ENCODE measurements at regions of chr21 and their contacts with region 1.

Region 1: DNA sequence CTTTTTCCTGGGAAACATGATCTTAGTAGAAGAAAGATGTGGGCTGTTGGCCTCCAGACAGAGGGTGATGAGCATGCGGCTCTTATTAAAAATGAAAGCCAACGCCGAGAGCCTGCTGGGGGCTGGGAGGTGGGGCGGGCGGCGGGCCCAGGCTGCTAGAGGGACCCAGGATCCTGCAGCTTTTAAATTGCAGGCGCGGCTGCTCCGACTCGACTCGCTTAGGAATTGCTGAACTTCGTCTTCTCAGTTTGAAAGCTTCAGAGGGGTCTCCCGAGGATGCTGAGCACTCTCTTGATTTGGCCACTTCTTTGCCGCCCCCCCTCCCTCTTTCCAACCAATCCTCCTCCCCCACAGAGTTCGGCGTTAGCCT is 1.2 kb downstream of the AGPAT3 start:
- DNase-seq: peak; percentile 29 to 63 (median 47)
- H3K4me3 ChIP-seq: peak overlapping the region; percentile 62 to 69
- H3K4me3 Mint-ChIP-seq: peak overlapping the region; percentile 84 to 92 (median 88)
- H3K27ac ChIP-seq: peak overlapping the region; percentile 72
- H3K27ac Mint-ChIP-seq: peak overlapping the region; percentile 93 to 99 (median 95)
- H3K4me1 ChIP-seq: peaks cover 40% of the 10 kb centered on the region
- H3K4me1 Mint-ChIP-seq: peaks cover 33 to 53% (median 44%) of the 10 kb centered on the region in 4 donors
- H3K27me3 ChIP-seq: no peaks in the 10 kb centered on the region
- H3K27me3 Mint-ChIP-seq: peaks cover 0 to under 1% of the 10 kb centered on the region in 2 donors

Region 2: DNA sequence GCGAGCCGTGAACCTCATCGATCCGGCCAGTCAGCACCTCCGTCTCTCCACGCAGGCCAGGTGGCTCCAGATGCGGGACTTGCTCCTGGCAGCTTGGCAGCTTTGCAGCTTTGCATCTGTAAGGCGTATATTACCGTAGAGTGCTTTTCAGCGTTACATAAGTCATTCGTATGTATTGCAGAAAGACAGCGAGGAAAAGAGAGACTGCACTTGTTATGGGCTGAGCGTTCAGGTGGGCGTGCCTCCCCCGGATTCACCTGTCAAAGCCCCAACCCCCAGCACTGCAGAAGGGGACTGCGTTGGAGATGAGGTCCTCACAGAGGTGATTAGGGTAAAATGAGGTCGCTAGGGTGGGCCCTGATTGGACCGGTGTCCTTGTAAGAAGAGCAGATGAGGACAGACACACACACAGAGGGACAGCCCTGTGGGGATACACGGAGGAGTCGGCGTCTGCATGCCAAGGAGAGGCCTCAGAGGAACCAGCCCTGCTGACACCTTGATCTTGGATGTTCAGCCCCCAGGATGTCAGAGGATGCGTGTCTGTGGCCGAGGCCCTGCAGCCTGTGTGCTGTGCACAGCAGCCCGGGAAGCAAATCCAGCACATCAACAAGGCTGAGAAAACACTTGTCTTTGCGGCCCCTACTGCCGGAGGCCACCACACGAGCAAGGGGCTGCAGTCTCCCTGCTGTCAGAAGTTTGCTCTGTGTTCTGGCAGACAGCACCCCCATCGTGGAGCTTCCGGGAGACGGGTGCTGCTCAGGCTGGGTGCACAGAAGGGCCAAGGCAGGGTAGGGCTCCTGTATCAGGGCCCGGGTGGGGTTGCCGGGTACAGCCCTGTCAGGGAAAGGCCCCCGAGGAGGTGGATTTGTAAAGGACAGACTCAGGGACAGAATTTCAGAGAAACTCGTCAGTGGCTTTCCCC is 12.1 kb before region 1 on chr21:
- CTCF ChIA-PET with region 1: no interaction called
- POLR2A ChIA-PET with region 1: no interaction called
- intact Hi-C with region 1: no loop called
- DNase-seq: no peak
- H3K4me3 ChIP-seq: no peak overlapping the region
- H3K4me3 Mint-ChIP-seq: no peak overlapping the region
- H3K27ac ChIP-seq: no peak overlapping the region
- H3K27ac Mint-ChIP-seq: no peak overlapping the region
- H3K4me1 ChIP-seq: no peaks in the 10 kb centered on the region
- H3K4me1 Mint-ChIP-seq: peaks cover 0 to 12% (median 0%) of the 10 kb centered on the region in 4 donors
- H3K27me3 ChIP-seq: no peaks in the 10 kb centered on the region
- H3K27me3 Mint-ChIP-seq: peaks cover 5 to 11% of the 10 kb centered on the region in 2 donors

Region 3: DNA sequence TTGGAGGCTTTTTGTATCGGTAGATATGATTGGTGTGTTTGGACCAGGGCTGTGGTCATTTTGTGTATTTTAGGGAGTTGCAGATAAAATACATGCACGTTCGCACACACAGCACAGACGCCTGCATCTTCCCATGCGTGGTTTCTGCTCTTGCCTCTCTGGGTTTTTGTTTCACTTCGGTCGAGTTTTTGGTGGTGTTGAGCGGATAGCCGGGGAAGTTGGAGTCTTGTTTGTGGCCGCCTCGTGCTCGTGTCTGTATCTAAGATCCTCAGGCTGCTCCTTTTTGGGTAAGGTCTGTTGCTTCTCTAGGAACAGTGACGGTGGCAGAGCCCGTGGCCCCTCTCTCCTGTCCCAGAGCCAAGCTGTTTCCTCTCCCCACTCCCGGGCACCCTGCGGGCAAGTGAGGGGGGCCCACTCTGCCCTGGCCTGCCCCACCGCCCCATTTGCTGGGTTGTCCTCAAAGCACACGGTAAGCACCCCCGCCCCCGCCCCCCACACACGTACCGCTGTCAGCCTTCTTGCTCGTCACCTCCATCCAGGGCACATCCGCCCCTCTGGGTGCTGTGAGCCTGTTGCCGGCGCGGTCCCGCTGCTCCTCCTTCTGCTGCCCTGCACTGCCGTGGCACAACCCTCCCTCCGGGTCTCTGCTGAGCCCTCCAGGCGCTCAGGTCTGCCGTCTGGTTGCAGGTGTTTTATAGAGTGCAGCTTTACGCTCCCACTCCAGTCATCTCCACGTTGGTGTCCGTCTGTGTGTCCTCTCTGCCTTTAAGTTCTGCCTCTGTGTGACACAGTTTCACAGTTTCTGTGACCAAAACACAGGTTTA is 50.7 kb after region 1 on chr21:
- CTCF ChIA-PET with region 1: interaction called, 3 read pairs
- POLR2A ChIA-PET with region 1: interaction called, 5 read pairs
- intact Hi-C with region 1: loop called (anchors 2 kb)
- DNase-seq: peak; percentile 68 to 85 (median 75)
- H3K4me3 ChIP-seq: peak overlapping the region; percentile 5 to 51
- H3K4me3 Mint-ChIP-seq: peak overlapping the region; percentile 85 to 96 (median 90)
- H3K27ac ChIP-seq: peak overlapping the region; percentile 62
- H3K27ac Mint-ChIP-seq: peak overlapping the region; percentile 83 to 99 (median 95)
- H3K4me1 ChIP-seq: peaks cover 53% of the 10 kb centered on the region
- H3K4me1 Mint-ChIP-seq: peaks cover 43 to 74% (median 61%) of the 10 kb centered on the region in 4 donors
- H3K27me3 ChIP-seq: no peaks in the 10 kb centered on the region
- H3K27me3 Mint-ChIP-seq: no peaks in the 10 kb centered on the region

Measured in CD4-positive, alpha-beta memory T cell (primary cell).